ENCODE measurements at regions of chr12 and their contacts with region 1.

Region 1: GRCh38 chr12:122471324-122472226 is 29.2 kb downstream of the ZCCHC8 start:
- DNase-seq: peak; percentile 59
- H3K4me3 ChIP-seq: no peak overlapping the region
- H3K27ac ChIP-seq: no peak overlapping the region
- H3K27me3 ChIP-seq: no peaks in the 10 kb centered on the region
- CTCF ChIP-seq: peak; percentile 78

Region 2: GRCh38 chr12:122336015-122336946 is 135.3 kb before region 1 on chr12:
- CTCF ChIA-PET with region 1: interaction called, 48 read pairs
- POLR2A ChIA-PET with region 1: no interaction called
- DNase-seq: no peak
- H3K4me3 ChIP-seq: no peak overlapping the region
- H3K27ac ChIP-seq: no peak overlapping the region
- H3K27me3 ChIP-seq: no peaks in the 10 kb centered on the region
- CTCF ChIP-seq: peak; percentile 72

Region 3: DNA sequence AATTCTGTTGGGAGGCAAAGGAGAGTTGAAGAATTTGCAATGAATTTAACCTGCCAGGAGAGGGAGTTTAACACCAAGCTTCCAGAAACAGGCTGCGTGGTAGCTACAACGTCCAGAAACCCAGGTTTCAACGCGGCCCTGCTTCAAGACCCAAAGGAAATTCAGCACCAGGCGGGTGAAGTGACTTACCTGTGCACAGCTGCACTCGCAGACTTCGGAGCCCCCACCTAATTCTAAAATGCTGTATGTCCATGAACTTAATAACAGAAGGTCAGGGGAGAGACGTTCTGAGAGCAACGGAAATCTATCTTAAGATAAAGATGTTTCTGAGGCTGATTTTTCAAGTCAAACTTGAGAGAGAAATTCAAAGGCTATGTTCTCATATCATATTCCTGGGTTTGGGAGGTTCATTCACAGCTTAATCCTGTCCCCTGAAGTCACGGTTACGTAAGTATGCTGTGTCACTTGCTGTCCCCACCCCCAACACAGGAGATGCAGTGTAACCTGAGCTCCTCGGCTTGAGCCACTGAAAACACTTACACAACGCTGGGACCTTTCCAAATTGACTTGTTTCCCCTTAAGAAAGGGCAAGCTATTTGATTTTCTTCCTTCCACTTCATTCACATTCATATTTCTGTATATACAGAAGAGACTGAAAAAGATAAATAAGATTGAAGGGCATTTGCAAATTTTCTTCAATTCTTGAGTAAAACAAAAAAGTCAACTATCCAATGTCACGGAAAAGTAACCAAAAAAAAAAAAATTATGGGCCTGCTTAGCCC is 71.8 kb before region 1 on chr12:
- CTCF ChIA-PET with region 1: interaction called, 130 read pairs
- POLR2A ChIA-PET with region 1: interaction called, 13 read pairs
- DNase-seq: peak; percentile 75
- H3K4me3 ChIP-seq: peak overlapping the region; percentile 24; the same call in 1 of the 2 replicates
- H3K27ac ChIP-seq: peak overlapping the region; percentile 99
- H3K27me3 ChIP-seq: no peaks in the 10 kb centered on the region
- CTCF ChIP-seq: peak; percentile 80

Region 4: GRCh38 chr12:122421821-122422729 is 49.5 kb before region 1 on chr12 and contains the start of gene CLIP1:
- CTCF ChIA-PET with region 1: interaction called, 12 read pairs
- POLR2A ChIA-PET with region 1: interaction called, 3 read pairs
- DNase-seq: no peak
- H3K4me3 ChIP-seq: peak within 1 kb of the TSS; percentile 80
- H3K27ac ChIP-seq: peak within 1 kb of the TSS; percentile 97
- H3K27me3 ChIP-seq: no peaks in the 10 kb centered on the region
- CTCF ChIP-seq: peak; percentile 46
- polyA plus RNA-seq, gene CLIP1: 62.0 and 63.6 TPM in 2 replicates

Region 5: DNA sequence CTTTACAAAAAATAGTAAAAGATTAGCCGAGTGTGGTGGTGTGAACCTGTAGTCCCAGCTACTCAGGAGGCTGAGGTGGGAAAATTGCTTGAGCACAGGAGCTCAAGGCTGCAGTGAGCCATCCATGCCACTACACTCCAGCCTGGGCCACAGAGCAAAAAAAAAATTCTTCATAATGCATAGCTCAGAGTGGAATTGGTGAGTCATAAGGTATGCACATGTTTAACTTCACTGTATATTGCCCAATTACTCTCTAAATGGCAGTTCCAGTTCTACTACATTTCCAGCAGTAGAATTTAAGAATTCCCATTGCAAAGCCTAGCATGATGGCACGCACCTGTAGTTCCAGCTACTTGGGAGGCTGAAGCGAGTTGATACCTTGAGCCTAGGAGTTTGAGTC is 22.2 kb before region 1 on chr12:
- CTCF ChIA-PET with region 1: interaction called, 14 read pairs
- POLR2A ChIA-PET with region 1: no interaction called
- DNase-seq: peak; percentile 81
- H3K4me3 ChIP-seq: no peak overlapping the region
- H3K27ac ChIP-seq: peak overlapping the region; percentile 47
- H3K27me3 ChIP-seq: no peaks in the 10 kb centered on the region
- CTCF ChIP-seq: 0 out of 2 replicates have a peak, but pooled peaks have one; percentile 8

Region 6: DNA sequence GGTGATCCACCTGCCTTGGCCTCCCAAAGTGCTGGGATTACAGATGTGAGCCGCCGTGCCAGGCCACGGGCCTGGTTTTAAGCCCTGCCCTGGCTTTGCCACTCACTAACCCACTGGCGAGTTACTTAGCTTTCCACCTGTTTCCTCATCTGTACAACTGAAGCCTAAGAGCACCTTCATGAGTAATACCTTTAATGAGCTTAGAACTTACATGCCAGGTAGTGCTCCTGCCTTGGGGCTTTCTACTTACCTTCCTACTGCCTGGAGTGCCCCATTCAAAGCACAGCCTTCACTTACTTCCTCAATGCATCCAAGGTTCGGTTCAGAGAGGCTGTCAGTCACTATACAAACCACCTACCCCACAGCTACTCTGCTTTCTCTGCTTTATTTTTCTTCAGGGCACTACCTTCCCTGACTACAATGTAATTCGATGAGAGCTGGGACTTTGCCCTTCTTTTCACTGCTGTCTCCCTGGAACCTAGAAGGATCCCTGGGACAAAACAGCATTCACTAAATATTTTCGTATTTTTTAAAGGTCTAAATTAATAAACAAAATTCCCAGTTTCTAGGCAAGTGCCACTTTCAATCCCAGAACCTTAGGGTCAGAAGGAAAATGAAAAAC is 15.3 kb after region 1 on chr12:
- CTCF ChIA-PET with region 1: interaction called, 13 read pairs
- POLR2A ChIA-PET with region 1: no interaction called
- DNase-seq: no peak
- H3K4me3 ChIP-seq: no peak overlapping the region
- H3K27ac ChIP-seq: no peak overlapping the region
- H3K27me3 ChIP-seq: no peaks in the 10 kb centered on the region
- CTCF ChIP-seq: no peak

Region 7: DNA sequence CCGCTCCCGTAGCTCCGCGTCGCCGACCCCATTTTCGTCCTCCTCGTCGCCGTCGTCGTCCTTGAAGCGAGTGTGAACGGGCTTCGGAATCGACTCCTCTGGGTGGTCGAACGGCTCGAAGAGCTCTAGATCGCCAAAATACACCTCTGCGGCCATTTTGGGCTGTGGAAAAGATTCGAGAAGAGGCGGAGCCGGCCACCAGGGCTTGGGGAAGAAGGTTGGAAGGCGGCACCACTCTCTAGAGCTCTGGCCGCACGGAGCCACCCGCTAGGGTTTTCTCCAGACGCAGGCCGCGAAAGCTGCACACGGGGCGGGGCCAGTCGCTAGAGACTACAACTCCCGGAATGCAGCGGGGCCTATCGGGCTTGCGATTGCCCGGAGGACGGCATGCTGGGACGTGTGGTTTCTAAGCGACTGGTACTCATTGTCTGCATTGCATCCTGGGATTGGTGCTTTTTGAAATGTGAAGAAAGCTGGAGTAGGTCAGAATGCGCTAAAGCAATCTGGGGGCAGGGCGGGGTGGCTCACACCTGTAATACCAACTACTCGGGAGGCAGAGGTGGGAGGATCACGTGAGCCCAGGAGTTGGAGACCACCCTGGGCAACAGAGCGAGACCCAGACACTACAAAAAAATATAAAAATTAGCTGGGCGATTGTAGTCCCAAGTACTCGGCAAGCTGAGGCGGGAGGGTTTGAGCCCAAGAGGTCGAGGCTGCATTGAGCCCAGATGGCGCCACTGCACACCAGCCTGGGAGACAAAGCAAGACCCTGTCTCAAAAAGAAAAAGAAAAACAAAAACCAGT is 29.3 kb after region 1 on chr12 and contains the start of gene ZCCHC8:
- CTCF ChIA-PET with region 1: interaction called, 11 read pairs
- POLR2A ChIA-PET with region 1: no interaction called
- DNase-seq: peak; percentile 95
- H3K4me3 ChIP-seq: peak within 1 kb of the TSS; percentile 85
- H3K27ac ChIP-seq: peak within 1 kb of the TSS; percentile 97
- H3K27me3 ChIP-seq: no peaks in the 10 kb centered on the region
- CTCF ChIP-seq: peak; percentile 16; the same call in 1 of the 2 replicates
- polyA plus RNA-seq, gene ZCCHC8: 13.0 and 16.6 TPM in 2 replicates

Region 8: GRCh38 chr12:122610876-122611275 is 139.3 kb after region 1 on chr12:
- CTCF ChIA-PET with region 1: no interaction called
- POLR2A ChIA-PET with region 1: no interaction called
- DNase-seq: no peak
- H3K4me3 ChIP-seq: no peak overlapping the region
- H3K27ac ChIP-seq: no peak overlapping the region
- H3K27me3 ChIP-seq: no peaks in the 10 kb centered on the region
- CTCF ChIP-seq: no peak

Measured in AG04450 (cell line).